Endothelial cell of umbilical vein (primary cell): ENCODE measurements at regions of chr1 and their contacts with region 1.

Region 1: GRCh38 chr1:225460737-225461562 is 33.1 kb upstream of the LBR start:
- DNase-seq: no peak
- H3K4me3 ChIP-seq: no peak overlapping the region
- H3K27ac ChIP-seq: no peak overlapping the region
- H3K4me1 ChIP-seq: peaks cover 10% of the 10 kb centered on the region
- H3K27me3 ChIP-seq: no peaks in the 10 kb centered on the region
- CTCF ChIP-seq: no peak
- POLR2A ChIP-seq: no peak

Region 2: DNA sequence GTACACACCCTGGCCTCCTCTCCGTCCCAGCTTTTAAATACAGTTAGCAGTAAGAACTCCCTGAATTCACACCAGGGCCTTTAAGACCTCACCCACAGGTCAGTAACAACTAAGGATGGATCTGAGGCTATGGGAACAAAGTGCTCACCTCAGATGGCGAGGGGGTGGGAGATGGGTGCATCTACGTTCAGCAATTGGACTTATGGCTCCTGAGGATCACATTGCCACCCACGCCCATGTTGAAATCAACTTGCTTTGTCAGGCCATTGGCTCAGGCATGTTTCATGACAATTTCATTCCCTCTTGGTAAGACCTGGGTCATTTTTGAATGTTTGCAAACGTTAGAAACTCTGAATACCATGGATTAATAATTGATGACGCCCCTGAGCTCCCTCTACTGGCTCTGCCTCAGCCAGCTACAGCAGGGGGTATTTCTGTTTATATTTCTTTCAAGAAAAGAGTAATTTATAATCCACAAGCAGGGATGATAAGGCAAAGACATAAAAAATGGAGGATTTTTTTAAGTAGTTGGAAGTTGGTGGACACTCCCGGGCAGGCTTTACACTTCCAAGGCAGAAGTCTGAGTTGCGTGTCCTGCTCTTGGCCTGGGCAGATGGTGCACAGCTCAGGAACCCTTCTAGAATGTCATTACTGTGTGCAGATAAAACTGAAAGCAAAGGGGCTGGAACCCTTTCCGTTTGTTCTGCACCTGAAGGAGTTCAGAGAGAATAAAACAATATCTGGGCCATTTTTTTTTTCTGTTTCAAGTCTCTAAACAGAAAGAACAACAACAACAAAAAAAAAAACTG is 19.4 kb before region 1 on chr1:
- CTCF ChIA-PET with region 1: interaction called, 15 read pairs
- POLR2A ChIA-PET with region 1: no interaction called
- dilution Hi-C with region 1: no loop called
- intact Hi-C with region 1: no loop called
- DNase-seq: no peak
- H3K4me3 ChIP-seq: no peak overlapping the region
- H3K27ac ChIP-seq: no peak overlapping the region
- H3K4me1 ChIP-seq: peaks cover 33% of the 10 kb centered on the region
- H3K27me3 ChIP-seq: no peaks in the 10 kb centered on the region
- CTCF ChIP-seq: peak; percentile 20 to 22
- POLR2A ChIP-seq: no peak